GM23248 (cell line): ENCODE measurements at regions of chr5 and their contacts with region 1.

Region 1: GRCh38 chr5:176660860-176661641 is 13.8 kb downstream of the TSPAN17 start:
- DNase-seq: peak; percentile 82
- H3K4me3 ChIP-seq: no peak overlapping the region
- H3K27ac ChIP-seq: no peak overlapping the region
- H3K4me1 ChIP-seq: no peaks in the 10 kb centered on the region
- H3K27me3 ChIP-seq: peaks cover 11% of the 10 kb centered on the region

Region 2: GRCh38 chr5:175521313-175521833 is 1139.7 kb before region 1 on chr5:
- in situ Hi-C with region 1: no loop called
- DNase-seq: no peak
- H3K4me3 ChIP-seq: no peak overlapping the region
- H3K27ac ChIP-seq: no peak overlapping the region
- H3K4me1 ChIP-seq: peaks cover 10% of the 10 kb centered on the region
- H3K27me3 ChIP-seq: no peaks in the 10 kb centered on the region

Region 3: GRCh38 chr5:176959051-176959450 is 298.0 kb after region 1 on chr5:
- in situ Hi-C with region 1: loop called (anchors 10 kb)
- DNase-seq: peak; percentile 60
- H3K4me3 ChIP-seq: no peak overlapping the region
- H3K27ac ChIP-seq: no peak overlapping the region
- H3K4me1 ChIP-seq: no peaks in the 10 kb centered on the region
- H3K27me3 ChIP-seq: no peaks in the 10 kb centered on the region

Region 4: GRCh38 chr5:177113566-177114424 is 452.7 kb after region 1 on chr5:
- in situ Hi-C with region 1: loop called (anchors 10 kb)
- DNase-seq: peak; percentile 76
- H3K4me3 ChIP-seq: no peak overlapping the region
- H3K27ac ChIP-seq: no peak overlapping the region
- H3K4me1 ChIP-seq: no peaks in the 10 kb centered on the region
- H3K27me3 ChIP-seq: no peaks in the 10 kb centered on the region